Ascending aorta (tissue), 2 donors: ENCODE measurements at regions of chr5 and their contacts with region 1.

Region 1: DNA sequence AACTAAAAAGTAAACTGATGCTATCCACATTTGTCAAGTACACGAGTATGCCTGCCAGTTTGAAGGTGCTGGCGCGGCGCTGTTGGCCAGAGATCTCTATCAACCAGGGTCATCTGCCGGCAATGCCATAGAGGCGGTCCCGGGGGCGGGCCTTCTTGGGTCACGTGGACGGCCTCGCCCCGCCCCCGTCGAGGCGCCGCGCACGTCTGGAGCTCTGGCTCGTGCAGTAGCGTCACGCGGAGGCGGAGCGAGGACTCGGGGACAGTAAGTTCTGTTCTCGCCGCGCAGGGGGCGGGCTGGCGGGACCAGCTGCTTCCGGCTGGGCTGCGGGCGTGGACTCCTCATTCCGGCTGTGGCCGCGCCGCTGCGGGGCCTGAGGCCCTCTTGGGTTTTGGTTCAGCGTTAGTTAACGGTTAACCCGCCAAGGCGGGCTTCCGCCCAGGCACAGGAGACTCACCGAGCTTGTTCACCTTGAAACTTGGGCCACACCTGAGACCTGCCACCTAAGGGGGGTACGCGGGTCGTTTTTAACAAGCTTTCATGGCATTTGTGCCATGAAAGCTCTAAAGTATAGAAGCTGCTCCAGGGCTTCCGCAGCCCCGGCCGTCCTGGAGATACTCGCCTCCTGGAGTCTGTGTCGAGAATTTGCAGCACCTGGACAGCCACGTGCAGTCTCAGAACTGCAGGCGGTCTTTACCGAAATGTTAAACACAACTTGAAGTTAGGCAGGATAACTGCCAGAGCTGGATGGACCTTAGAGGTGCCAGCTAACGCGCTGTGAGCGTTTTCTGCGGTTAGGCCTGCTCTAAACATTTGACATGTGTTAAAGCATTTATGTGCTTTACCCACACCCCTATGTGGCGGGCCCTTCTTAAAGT is at the start of gene RFESD:
- DNase-seq: peak; percentile 97 to 100
- H3K4me3 ChIP-seq: peak within 1 kb of the TSS; percentile 59 to 77
- H3K27ac ChIP-seq: peak within 1 kb of the TSS; percentile 83 to 91
- H3K4me1 ChIP-seq: peaks cover 0 to 4% of the 10 kb centered on the region in 2 donors
- H3K27me3 ChIP-seq: no peaks in the 10 kb centered on the region
- CTCF ChIP-seq: peak in 1 of 3 experiments; percentile 22
- total RNA-seq, gene RFESD: not detected

Region 2: DNA sequence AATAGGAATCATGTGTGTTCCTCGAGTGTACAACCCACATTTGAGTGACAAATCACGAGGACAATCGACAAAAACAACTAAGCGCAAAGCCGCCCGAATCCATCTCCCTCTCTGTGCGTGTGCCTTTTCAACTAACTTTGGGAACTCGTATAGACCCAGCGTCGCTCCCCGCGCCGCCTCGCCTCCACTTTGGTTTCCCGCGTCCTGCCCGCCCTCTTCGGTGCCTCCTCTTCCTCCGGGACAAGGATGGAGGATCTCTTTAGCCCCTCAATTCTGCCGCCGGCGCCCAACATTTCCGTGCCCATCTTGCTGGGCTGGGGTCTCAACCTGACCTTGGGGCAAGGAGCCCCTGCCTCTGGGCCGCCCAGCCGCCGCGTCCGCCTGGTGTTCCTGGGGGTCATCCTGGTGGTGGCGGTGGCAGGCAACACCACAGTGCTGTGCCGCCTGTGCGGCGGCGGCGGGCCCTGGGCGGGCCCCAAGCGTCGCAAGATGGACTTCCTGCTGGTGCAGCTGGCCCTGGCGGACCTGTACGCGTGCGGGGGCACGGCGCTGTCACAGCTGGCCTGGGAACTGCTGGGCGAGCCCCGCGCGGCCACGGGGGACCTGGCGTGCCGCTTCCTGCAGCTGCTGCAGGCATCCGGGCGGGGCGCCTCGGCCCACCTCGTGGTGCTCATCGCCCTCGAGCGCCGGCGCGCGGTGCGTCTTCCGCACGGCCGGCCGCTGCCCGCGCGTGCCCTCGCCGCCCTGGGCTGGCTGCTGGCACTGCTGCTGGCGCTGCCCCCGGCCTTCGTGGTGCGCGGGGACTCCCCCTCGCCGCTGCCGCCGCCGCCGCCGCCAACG is 26.5 kb before region 1 on chr5 and contains the start of gene GPR150:
- intact Hi-C with region 1: loop called (anchors 2 kb)
- DNase-seq: peak in 1 of 2 donors; percentile 74
- H3K4me3 ChIP-seq: peak within 1 kb of the TSS; percentile 71 to 73
- H3K27ac ChIP-seq: no peak within 1 kb of the TSS
- H3K4me1 ChIP-seq: peaks cover 3 to 8% of the 10 kb centered on the region in 2 donors
- H3K27me3 ChIP-seq: no peaks in the 10 kb centered on the region
- CTCF ChIP-seq: peak in 1 of 3 experiments; percentile 6
- total RNA-seq, gene GPR150: 9.6 TPM

Region 3: GRCh38 chr5:95781101-95781583 is 134.3 kb after region 1 on chr5:
- intact Hi-C with region 1: loop called (anchors 5 kb)
- DNase-seq: peak; percentile 32 to 92
- H3K4me3 ChIP-seq: no peak overlapping the region
- H3K27ac ChIP-seq: peak overlapping the region; percentile 54 to 73
- H3K4me1 ChIP-seq: peaks cover 0 to 12% of the 10 kb centered on the region in 2 donors
- H3K27me3 ChIP-seq: no peaks in the 10 kb centered on the region
- CTCF ChIP-seq: peak; percentile 87 to 89 (median 88)

Region 4: DNA sequence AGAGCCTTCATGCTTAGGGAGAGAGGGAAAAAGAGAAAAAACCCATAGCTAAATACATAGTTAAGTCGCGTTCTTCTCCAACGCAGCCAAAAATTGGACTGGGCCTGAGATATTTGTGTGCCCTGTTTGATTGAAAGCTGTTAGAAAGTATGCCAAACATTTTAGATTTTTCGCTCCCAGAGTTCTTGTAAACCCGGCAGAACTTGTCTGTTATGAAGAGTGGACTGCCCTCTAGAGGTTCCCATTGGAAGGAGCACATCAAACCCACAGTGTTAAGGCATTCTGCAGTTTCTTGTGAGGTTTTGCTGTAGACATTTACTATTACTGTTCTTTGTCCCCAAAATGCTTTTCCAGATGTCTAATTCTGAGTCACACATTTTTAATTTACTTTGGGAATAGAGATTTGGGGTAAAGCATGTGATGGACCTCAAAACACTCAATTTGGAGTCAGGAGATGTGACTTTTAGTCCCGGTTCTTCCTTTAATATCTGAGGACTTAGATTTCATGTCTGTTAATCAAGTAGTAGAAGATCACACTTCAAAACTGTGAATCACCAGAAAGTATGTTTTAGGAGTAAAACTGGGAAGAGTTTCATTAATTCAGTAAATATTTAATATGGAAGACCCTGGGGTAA is 689.7 kb after region 1 on chr5:
- intact Hi-C with region 1: loop called (anchors 5 kb)
- DNase-seq: peak in 1 of 2 donors; percentile 91
- H3K4me3 ChIP-seq: no peak overlapping the region
- H3K27ac ChIP-seq: peak overlapping the region; percentile 80 to 81
- H3K4me1 ChIP-seq: peaks cover 11 to 67% of the 10 kb centered on the region in 2 donors
- H3K27me3 ChIP-seq: no peaks in the 10 kb centered on the region
- CTCF ChIP-seq: peak; percentile 84 to 86 (median 84)

Region 5: DNA sequence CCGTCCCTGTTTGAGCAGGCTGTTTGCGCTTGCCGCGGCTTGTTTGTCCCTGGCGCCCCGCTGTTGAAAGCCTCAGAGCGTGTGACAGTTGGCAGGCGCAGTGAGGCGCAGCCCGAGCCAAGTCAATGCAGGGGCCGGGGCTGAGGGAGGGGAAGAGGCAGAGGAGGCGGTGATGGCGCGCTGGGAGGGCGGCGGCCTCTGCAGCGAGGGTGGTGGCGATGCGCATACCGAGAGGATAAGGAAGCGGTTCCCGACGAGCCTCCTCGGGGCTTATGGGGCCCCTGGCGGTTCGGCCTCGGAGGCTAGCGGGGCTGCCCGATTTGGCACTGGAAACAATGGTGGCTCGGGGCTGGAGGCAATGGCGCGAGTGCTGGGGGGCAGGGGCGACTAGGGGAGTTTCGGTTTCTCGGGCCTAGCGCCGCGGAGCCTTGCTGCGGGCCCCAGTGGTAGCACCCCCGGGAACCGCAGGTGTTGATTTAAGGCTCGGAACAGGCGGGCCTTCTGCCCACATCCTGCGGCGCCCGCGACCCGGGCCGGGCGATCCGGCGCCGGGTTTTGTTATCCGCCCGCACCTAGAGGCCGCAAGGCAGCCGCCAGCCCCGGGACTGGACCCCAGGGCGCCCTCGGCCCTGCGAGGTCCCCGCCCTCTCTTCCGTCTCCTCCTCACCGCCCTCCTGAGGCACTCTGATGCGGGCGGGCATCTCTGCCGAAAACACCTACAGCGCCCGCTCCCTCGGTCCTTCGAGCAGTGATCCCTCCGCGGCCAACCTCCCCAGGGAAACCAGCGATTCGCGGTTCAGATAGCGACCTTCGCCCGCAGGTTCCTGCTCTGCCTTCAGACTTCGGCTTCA is 1288.1 kb after region 1 on chr5:
- intact Hi-C with region 1: loop called (anchors 10 kb)
- DNase-seq: peak; percentile 69 to 96
- H3K4me3 ChIP-seq: peak overlapping the region; percentile 90 to 95
- H3K27ac ChIP-seq: peak overlapping the region; percentile 92 to 94
- H3K4me1 ChIP-seq: peaks cover 4 to 13% of the 10 kb centered on the region in 2 donors
- H3K27me3 ChIP-seq: no peaks in the 10 kb centered on the region
- CTCF ChIP-seq: no peak